PC-9 (cell line): ENCODE measurements at regions of chr16 and their contacts with region 1.

Region 1: DNA sequence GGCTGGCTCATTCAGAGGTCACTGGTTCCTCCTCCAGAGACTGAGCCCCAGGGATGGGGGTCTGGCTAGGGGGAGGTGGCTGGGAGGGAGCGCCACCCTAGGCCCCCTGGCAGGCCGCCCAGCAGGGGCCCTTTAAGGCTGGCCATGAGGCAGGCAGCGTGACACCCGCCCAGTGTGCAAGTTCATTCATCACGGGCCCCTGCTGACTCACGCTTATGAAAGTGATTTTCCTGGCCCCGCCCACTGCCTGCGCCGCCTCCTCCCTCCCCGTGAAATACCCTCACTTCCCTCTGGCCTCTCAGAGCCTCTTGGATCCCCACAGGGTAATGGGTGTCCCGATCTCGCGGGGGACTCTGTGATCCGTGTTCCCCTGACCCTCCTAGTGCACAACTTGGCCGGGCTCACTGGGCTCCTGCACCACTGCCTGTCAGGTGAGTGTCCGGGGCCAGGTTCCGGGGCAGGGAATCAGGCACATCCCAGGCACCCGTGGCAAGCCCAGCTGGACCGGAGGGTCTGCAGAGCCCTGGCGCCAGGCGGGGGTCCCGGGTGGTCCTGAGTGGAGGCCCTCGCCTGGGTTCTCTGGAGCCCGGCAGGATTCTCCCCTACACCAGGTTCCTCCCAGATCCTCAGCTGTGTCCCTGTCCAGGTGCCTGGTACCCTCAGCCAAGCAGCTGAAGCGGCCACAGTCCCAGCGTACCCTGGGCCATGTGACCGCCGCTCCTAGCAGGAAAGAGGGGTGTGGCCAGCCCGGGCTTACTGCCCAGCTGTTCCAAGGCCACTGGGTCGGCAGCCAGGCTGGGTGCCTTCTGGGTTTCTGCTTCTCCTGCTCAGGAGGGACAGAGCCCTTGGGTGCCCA is at the start of gene OSGIN1:
- DNase-seq: peak; percentile 82 to 93
- H3K4me3 ChIP-seq: peak within 1 kb of the TSS; percentile 87
- H3K27ac ChIP-seq: peak within 1 kb of the TSS; percentile 91
- H3K4me1 ChIP-seq: peaks cover 22% of the 10 kb centered on the region
- H3K27me3 ChIP-seq: no peaks in the 10 kb centered on the region
- CTCF ChIP-seq: no peak
- total RNA-seq, gene OSGIN1: 41.3 and 44.8 TPM in 2 replicates

Region 2: DNA sequence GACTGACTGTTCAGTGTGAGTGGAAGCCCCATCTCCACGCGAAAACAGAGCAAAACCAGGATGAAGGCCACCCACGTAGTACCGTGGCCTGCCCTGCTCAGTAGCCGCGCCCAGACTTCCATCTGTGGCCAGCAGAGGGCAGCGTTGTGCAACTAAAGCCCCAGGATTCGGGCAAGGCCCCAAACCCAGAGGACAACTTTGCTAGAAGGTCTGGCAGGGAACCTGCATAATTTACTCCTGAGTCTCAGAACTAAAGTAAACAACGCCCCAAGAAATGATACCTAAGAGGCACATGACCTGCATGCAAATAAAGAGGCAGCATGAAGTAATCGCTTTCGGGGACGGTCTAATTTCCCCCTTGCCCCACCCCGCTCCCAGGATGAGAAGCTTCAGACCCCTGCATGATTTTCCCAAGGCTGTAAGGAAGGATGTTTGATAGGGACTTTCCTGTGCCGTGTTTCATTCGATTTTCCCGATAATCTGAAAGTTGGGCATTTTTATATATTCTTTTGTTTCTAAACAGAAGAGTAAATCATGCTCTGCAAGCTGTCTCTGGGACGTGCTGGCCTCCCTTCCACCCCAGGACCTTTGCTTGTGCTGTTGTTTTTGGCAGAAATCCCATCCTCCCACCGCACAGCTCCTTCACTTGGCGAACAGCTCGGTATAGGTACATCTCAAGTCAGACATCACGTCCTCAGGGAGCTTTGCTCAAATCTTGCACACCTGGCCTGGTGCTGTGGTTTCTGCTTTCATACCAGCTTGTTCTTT is 126.8 kb before region 1 on chr16:
- CTCF ChIA-PET with region 1: no interaction called
- POLR2A ChIA-PET with region 1: no interaction called
- intact Hi-C with region 1: loop called (anchors 10 kb)
- DNase-seq: peak; percentile 85 to 88
- H3K4me3 ChIP-seq: no peak overlapping the region
- H3K27ac ChIP-seq: no peak overlapping the region
- H3K4me1 ChIP-seq: peaks cover 9% of the 10 kb centered on the region; the same call in 1 of the 2 replicates
- H3K27me3 ChIP-seq: peaks cover 35% of the 10 kb centered on the region; the same call in 1 of the 2 replicates
- CTCF ChIP-seq: peak; percentile 91

Region 3: DNA sequence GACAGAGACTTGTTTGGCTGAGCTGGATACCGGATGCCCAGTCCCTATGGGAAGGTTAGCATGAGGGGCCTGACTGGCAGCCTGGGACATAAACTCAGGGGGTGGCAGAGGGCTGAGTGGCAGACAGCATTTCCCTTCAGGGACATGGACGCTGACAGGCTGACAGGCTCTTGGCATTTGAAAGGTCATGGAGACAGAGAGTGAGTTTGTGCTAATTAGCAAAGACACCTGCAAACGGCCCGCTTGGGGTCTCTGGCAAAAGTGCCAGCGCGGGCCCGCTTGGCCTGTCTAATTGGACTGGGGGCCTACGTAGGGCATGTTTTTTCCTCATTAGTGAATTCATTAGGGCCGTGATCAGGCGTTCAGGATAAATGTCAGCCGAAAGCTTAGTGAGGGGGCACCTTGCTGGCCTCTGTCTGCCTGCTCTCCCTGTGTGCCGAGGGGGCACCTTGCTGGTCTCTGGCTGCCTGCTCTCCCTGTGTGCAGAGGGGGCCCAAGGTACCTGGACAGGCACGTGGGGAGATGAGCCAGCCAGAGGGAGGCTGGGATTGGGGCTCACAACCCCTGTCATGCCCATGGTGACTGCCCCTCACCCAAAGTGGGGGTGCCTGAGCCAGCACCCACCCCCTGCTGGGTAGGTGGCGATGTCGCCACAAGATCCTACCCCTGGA is 22.6 kb after region 1 on chr16:
- CTCF ChIA-PET with region 1: no interaction called
- POLR2A ChIA-PET with region 1: no interaction called
- intact Hi-C with region 1: no loop called
- DNase-seq: no peak
- H3K4me3 ChIP-seq: no peak overlapping the region
- H3K27ac ChIP-seq: no peak overlapping the region
- H3K4me1 ChIP-seq: no peaks in the 10 kb centered on the region
- H3K27me3 ChIP-seq: no peaks in the 10 kb centered on the region
- CTCF ChIP-seq: no peak

Region 4: GRCh38 chr16:84013787-84014569 is 60.8 kb after region 1 on chr16:
- CTCF ChIA-PET with region 1: interaction called, 11 read pairs
- POLR2A ChIA-PET with region 1: interaction called, 31 read pairs
- intact Hi-C with region 1: loop called (anchors 2 kb)
- DNase-seq: peak; percentile 95 to 99
- H3K4me3 ChIP-seq: no peak overlapping the region
- H3K27ac ChIP-seq: no peak overlapping the region
- H3K4me1 ChIP-seq: 0 out of 2 replicates have a peak, but pooled peaks cover 3% of the 10 kb centered on the region
- H3K27me3 ChIP-seq: no peaks in the 10 kb centered on the region
- CTCF ChIP-seq: no peak

Region 5: DNA sequence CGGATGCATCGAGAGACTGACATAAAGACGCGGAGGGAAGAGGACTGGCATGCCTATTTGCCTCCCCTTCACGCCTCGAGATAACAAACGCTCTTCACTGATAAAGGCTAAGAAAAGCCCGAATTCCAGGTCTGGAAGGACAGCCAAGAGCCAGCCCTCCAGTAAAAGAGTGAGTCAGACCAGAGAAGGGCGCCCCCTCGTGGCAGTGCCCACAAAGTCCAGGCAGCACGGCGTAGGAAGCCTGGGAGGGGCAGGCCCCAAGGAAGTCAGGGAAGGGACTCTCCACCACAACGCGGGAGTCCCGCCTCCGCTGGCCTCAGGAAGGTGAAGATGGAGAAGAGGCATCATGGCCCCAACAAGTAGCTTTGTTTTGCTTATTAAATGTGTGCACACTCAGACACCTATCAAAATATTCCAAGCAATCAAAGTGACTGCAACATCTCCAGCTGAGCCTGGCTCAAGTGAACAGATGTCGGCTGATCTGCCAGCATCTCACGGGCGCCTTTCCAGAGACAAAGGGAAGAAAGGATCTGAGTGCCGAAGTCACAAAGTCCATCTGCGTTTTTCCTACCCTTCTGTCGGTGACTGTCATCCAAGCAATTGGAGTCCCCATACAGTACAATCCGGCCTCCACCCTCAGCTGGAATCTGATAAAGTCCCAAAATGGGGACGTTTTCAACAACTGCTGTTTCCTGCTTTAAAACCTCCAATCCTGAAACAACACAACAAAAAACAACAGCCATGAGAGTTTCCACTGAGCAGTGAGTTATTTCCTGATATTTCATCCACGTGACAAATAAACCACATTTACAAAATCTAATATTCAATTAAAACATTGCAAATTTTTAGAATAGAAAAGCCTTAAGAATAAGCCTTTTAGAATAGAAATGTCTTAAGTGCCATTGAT is 109.8 kb after region 1 on chr16:
- CTCF ChIA-PET with region 1: interaction called, 13 read pairs
- POLR2A ChIA-PET with region 1: interaction called, 3 read pairs
- intact Hi-C with region 1: loop called (anchors 1 kb)
- DNase-seq: peak; percentile 44 to 76
- H3K4me3 ChIP-seq: no peak overlapping the region
- H3K27ac ChIP-seq: no peak overlapping the region
- H3K4me1 ChIP-seq: no peaks in the 10 kb centered on the region
- H3K27me3 ChIP-seq: no peaks in the 10 kb centered on the region
- CTCF ChIP-seq: peak; percentile 89

Region 6: DNA sequence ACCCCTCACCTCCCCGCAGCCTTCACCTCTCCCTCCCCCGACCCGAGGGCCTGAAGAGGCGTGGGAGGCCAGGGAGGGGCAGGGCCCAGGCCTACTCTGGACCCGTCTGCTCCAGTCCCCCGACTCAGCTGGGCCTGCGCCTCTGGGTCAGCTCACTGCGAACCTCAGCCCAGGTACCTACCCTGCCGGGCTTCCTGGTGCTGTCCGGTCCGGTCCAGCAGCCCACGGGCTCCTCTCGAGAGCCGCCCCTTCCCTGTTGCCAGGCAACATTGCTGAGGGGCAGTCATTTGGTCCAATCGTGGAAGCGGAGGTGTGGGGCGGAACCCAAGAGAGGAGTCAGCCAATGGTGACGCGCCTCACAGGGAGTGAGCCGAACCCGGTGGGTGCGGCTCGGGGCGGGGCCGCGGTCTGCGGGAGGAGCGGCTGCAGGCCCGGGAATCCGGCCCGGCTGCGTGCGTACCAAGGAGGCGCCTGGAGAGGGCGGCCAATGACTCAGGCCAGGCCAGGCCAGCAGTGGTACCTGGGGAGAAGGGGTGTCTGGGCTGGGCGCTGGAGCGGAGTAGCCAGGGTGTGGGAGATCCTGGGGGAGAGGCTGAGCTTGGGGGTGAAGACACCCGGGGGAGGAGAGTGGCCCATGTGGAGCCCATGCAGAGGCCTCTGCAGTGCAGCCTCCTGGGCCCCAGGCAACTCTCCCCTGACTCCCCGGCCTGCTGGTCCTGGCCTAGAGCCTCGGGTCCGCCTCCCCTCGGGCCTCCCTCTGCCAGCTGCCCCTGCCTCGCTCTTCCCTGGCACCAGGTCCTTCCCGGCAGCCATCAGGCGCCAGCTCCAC is 551.5 kb after region 1 on chr16 and contains the start of gene MEAK7:
- CTCF ChIA-PET with region 1: no interaction called
- POLR2A ChIA-PET with region 1: no interaction called
- intact Hi-C with region 1: loop called (anchors 5 kb)
- DNase-seq: peak; percentile 95 to 99
- H3K4me3 ChIP-seq: peak within 1 kb of the TSS; percentile 92
- H3K27ac ChIP-seq: peak within 1 kb of the TSS; percentile 99
- H3K4me1 ChIP-seq: peaks cover 59% of the 10 kb centered on the region
- H3K27me3 ChIP-seq: no peaks in the 10 kb centered on the region
- CTCF ChIP-seq: no peak
- total RNA-seq, gene MEAK7: 73.4 and 74.6 TPM in 2 replicates